Activated B cell treated with CpG ODN at 0.5 μM for 24 hours (primary cell): ENCODE measurements at regions of chr1 and their contacts with region 1.

Region 1: DNA sequence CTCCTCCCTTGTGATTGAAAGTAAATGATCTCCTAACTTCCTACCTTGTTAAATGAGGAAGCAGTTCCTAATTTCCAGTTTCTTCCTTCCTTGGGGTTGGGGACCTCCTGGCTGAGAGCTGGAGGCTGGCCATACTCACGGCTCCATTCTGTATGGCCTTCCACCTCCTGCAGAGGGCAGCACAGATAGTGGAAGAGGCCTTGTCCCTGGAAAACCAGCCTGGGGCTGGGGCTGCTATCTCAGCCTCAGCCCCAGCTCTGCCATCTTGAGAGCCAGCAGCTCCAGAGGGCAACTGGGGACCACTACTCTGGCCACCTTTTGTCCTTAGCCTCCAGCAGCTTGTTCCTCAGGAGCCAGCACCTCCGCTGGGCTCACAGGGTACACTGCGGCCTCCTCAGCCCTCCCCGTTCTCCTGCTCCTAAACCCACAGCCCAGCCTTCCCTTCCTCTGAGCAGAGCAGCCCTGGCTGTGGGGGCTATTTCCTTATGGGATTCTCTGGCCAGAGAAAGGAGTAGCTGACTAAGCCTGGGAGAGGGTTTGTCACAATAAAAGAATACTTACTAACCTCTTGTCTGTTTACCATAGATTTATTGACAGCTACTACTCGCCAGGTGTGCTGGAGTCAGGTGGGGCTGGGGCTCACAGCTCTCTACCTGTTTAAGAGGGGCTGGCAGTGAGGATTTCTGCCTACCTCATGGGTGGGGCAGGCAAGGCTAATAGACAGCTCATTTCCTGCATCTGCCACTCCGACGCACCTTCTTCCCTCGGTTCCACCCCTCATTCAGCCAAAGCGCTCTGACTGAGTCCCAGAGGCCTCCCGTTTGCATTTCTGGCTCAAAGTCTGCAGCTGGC is 6.3 kb downstream of the TMEM234 start:
- DNase-seq: no peak
- ATAC-seq: peak; percentile 93
- H3K4me3 Mint-ChIP-seq: no peak overlapping the region
- H3K27ac Mint-ChIP-seq: no peak overlapping the region
- H3K4me1 Mint-ChIP-seq: peaks cover 21% of the 10 kb centered on the region
- H3K27me3 Mint-ChIP-seq: no peaks in the 10 kb centered on the region
- CTCF ChIP-seq: peak; percentile 44

Region 2: DNA sequence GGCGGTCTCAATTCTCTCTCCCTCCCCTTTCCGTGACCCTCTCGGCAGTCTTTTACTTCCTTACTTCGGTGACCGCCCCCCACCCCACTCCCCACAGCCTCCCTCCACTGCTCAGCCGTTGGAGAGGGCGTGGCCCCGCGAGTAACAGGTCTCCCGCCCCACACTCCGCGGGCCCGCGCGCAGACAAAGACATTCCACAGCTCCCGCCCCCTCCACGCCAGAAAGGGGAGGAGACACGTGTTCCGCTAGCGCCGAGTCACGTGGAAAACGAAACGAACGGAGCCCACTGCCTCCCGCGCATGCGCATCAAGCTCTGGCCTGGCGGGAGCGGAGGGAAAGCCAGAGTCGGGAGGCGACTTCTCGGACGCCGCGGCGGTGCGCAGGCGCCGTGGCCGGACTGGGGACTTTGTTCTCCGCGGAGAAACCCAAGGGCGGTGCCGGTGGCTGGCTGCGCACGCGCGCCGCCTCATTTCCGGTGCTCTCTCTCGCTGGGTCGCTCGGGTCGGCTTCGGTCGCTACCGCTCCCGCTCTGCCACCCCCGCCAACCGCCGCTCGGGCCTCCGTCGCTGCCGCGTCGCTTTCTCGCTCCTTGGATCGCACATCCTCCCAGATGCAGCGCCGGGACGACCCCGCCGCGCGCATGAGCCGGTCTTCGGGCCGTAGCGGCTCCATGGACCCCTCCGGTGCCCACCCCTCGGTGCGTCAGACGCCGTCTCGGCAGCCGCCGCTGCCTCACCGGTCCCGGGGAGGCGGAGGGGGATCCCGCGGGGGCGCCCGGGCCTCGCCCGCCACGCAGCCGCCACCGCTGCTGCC is 202.3 kb before region 1 on chr1 and contains the start of gene KHDRBS1:
- CTCF ChIA-PET with region 1: no interaction called
- POLR2A ChIA-PET with region 1: no interaction called
- intact Hi-C with region 1: no loop called
- DNase-seq: peak; percentile 97
- ATAC-seq: peak; percentile 85
- H3K4me3 Mint-ChIP-seq: peak within 1 kb of the TSS; percentile 98
- H3K27ac Mint-ChIP-seq: peak within 1 kb of the TSS; percentile 91
- H3K4me1 Mint-ChIP-seq: peaks cover 39% of the 10 kb centered on the region
- H3K27me3 Mint-ChIP-seq: no peaks in the 10 kb centered on the region
- CTCF ChIP-seq: no peak
- total RNA-seq, gene KHDRBS1: 146 and 152 TPM in 2 replicates

Region 3: GRCh38 chr1:32100807-32101697 is 114.8 kb before region 1 on chr1:
- CTCF ChIA-PET with region 1: no interaction called
- POLR2A ChIA-PET with region 1: no interaction called
- intact Hi-C with region 1: no loop called
- DNase-seq: no peak
- ATAC-seq: no peak
- H3K4me3 Mint-ChIP-seq: no peak overlapping the region
- H3K27ac Mint-ChIP-seq: no peak overlapping the region
- H3K4me1 Mint-ChIP-seq: no peaks in the 10 kb centered on the region
- H3K27me3 Mint-ChIP-seq: no peaks in the 10 kb centered on the region
- CTCF ChIP-seq: no peak

Region 4: GRCh38 chr1:32205401-32206370 is 10.2 kb before region 1 on chr1 and contains the start of gene IQCC:
- CTCF ChIA-PET with region 1: interaction called, 23 read pairs
- POLR2A ChIA-PET with region 1: interaction called, 18 read pairs
- intact Hi-C with region 1: loop called (anchors 1 kb)
- DNase-seq: peak; percentile 76
- ATAC-seq: peak; percentile 45
- H3K4me3 Mint-ChIP-seq: peak within 1 kb of the TSS; percentile 85
- H3K27ac Mint-ChIP-seq: peak within 1 kb of the TSS; percentile 41
- H3K4me1 Mint-ChIP-seq: peaks cover 74% of the 10 kb centered on the region
- H3K27me3 Mint-ChIP-seq: no peaks in the 10 kb centered on the region
- CTCF ChIP-seq: no peak
- total RNA-seq, gene IQCC: 3.5 and 4.2 TPM in 2 replicates

Region 5: DNA sequence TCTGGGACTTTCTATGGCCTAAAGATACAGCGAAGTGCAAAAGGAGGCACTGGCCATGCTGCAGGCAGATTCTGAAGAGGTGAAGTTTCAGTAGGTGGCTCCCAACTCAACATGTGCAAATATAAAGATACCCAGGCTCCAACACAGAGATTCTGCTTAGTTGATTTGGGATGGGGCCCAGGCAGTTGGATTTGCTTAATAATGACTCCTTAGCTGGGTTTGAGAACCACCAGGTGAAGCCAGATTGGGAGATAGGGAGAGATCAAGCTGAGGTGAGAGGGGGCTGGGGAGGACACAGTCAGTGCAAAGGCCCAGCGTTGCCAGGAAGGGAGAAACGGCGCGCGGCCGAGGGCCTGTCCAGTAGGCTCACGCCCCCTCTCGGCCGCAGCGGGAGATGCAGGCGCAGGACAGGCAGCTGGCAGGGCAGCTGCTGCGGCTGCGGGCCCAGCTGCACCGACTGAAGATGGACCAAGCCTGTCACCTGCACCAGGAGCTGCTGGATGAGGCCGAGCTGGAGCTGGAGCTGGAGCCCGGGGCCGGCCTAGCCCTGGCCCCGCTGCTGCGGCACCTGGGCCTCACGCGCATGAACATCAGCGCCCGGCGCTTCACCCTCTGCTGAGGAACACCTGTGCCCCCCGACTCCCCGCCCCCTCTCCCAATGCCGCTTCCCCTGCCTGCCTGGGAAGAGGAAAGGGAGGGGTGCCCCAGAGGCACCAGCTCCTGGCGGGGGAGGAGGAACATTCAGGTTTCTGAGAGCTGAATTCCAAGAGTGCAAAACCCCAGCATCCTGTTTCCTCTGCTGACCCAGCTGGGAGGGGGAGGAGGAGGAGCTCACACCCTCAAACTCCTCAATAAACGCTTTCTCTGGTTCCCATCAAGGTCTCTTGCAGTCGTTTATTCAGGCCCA is 32.4 kb after region 1 on chr1:
- CTCF ChIA-PET with region 1: interaction called, 47 read pairs
- POLR2A ChIA-PET with region 1: interaction called, 47 read pairs
- intact Hi-C with region 1: no loop called
- DNase-seq: peak; percentile 71
- ATAC-seq: peak; percentile 13
- H3K4me3 Mint-ChIP-seq: peak overlapping the region; percentile 45
- H3K27ac Mint-ChIP-seq: peak overlapping the region; percentile 81
- H3K4me1 Mint-ChIP-seq: peaks cover 70% of the 10 kb centered on the region
- H3K27me3 Mint-ChIP-seq: no peaks in the 10 kb centered on the region
- CTCF ChIP-seq: no peak

Region 6: GRCh38 chr1:32351399-32352238 is 135.8 kb after region 1 on chr1:
- CTCF ChIA-PET with region 1: interaction called, 3 read pairs
- POLR2A ChIA-PET with region 1: interaction called, 11 read pairs
- intact Hi-C with region 1: no loop called
- DNase-seq: peak; percentile 90
- ATAC-seq: peak; percentile 96
- H3K4me3 Mint-ChIP-seq: peak overlapping the region; percentile 91
- H3K27ac Mint-ChIP-seq: peak overlapping the region; percentile 91
- H3K4me1 Mint-ChIP-seq: peaks cover 22% of the 10 kb centered on the region
- H3K27me3 Mint-ChIP-seq: no peaks in the 10 kb centered on the region
- CTCF ChIP-seq: no peak

Region 7: DNA sequence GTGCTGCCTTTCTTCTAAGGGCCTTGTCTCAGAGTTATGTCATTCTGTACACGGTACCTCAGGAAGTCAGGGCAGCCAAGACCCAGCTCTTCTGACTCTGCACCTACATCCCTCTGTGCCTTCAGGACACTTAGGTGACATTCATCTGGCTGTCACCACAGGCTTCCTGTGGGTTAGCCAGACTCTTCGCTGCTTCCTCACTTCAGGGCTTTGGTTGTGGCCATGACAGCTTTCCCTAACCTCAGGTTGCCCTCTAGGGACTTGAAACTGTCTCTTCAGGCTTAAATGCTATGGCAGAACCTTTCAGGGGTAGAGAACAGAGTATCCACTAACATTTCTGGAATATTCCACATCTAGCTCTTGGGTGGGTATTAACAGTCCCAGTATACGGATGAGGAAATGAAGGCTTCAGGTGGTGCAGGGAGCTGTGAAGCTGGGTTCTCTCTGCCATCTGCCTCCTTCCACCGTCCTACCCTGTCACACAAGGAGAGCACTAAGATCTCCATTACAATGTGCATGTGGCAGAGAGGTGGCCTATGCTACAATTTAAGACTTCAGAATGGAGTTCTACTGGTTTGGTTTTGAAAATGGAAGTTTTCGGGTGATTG is 156.4 kb after region 1 on chr1:
- CTCF ChIA-PET with region 1: interaction called, 15 read pairs
- POLR2A ChIA-PET with region 1: interaction called, 5 read pairs
- intact Hi-C with region 1: no loop called
- DNase-seq: no peak
- ATAC-seq: peak; percentile 80
- H3K4me3 Mint-ChIP-seq: no peak overlapping the region
- H3K27ac Mint-ChIP-seq: no peak overlapping the region
- H3K4me1 Mint-ChIP-seq: peaks cover 11% of the 10 kb centered on the region
- H3K27me3 Mint-ChIP-seq: no peaks in the 10 kb centered on the region
- CTCF ChIP-seq: no peak

Region 8: GRCh38 chr1:32413507-32414185 is 197.8 kb after region 1 on chr1:
- CTCF ChIA-PET with region 1: interaction called, 8 read pairs
- POLR2A ChIA-PET with region 1: no interaction called
- intact Hi-C with region 1: loop called (anchors 1 kb)
- DNase-seq: peak; percentile 28
- ATAC-seq: peak; percentile 88
- H3K4me3 Mint-ChIP-seq: no peak overlapping the region
- H3K27ac Mint-ChIP-seq: no peak overlapping the region
- H3K4me1 Mint-ChIP-seq: peaks cover 3% of the 10 kb centered on the region
- H3K27me3 Mint-ChIP-seq: peaks cover 15% of the 10 kb centered on the region
- CTCF ChIP-seq: no peak